Naive thymus-derived CD4-positive, alpha-beta T cell (primary cell): ENCODE measurements at regions of chr9 and their contacts with region 1.

Region 1: GRCh38 chr9:36461323-36461722 is 61.3 kb upstream of the RNF38 start:
- DNase-seq: no peak
- ATAC-seq: peak; percentile 12
- H3K4me3 ChIP-seq: no peak overlapping the region
- H3K4me3 Mint-ChIP-seq: no peak overlapping the region
- H3K27ac ChIP-seq: no peak overlapping the region
- H3K27ac Mint-ChIP-seq: peak overlapping the region; percentile 29 to 71 (median 57)
- H3K4me1 ChIP-seq: peaks cover 18 to 23% of the 10 kb centered on the region in 2 donors
- H3K4me1 Mint-ChIP-seq: peaks cover 36 to 76% (median 68%) of the 10 kb centered on the region in 7 donors
- H3K27me3 ChIP-seq: no peaks in the 10 kb centered on the region
- H3K27me3 Mint-ChIP-seq: no peaks in the 10 kb centered on the region

Region 2: DNA sequence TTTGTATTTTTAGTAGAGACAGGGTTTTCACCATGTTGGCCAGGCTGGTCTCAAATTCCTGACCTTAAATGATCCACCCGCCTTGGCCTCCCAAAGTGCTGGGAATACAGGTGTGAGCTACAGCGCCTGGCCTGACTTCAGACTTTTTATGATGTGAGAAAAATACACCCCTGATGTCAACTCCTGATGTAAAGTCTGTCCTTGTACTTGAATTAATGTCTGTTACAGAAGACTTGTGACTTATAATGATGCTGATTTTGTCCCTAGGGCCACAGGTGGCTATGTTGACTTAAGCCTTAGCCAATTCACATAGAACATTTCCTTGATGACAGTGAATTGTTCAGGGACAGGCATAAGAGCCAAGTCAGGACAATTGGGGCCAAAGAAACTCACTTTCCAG is 68.9 kb after region 1 on chr9:
- CTCF ChIA-PET with region 1: no interaction called
- POLR2A ChIA-PET with region 1: no interaction called
- intact Hi-C with region 1: no loop called
- DNase-seq: no peak
- ATAC-seq: no peak
- H3K4me3 ChIP-seq: no peak overlapping the region
- H3K4me3 Mint-ChIP-seq: no peak overlapping the region
- H3K27ac ChIP-seq: no peak overlapping the region
- H3K27ac Mint-ChIP-seq: no peak overlapping the region
- H3K4me1 ChIP-seq: no peaks in the 10 kb centered on the region
- H3K4me1 Mint-ChIP-seq: peaks cover 0 to 4% (median 0%) of the 10 kb centered on the region in 7 donors
- H3K27me3 ChIP-seq: no peaks in the 10 kb centered on the region
- H3K27me3 Mint-ChIP-seq: peaks cover 0 to 9% (median 0%) of the 10 kb centered on the region in 5 donors

Region 3: GRCh38 chr9:36560857-36561221 is 99.5 kb after region 1 on chr9:
- CTCF ChIA-PET with region 1: interaction called, 20 read pairs
- POLR2A ChIA-PET with region 1: no interaction called
- intact Hi-C with region 1: loop called in 1 of 2 experiments (anchors 2 kb)
- DNase-seq: no peak
- ATAC-seq: no peak
- H3K4me3 ChIP-seq: no peak overlapping the region
- H3K4me3 Mint-ChIP-seq: no peak overlapping the region
- H3K27ac ChIP-seq: no peak overlapping the region
- H3K27ac Mint-ChIP-seq: no peak overlapping the region
- H3K4me1 ChIP-seq: no peaks in the 10 kb centered on the region
- H3K4me1 Mint-ChIP-seq: peaks cover 0 to 2% (median under 1%) of the 10 kb centered on the region in 7 donors
- H3K27me3 ChIP-seq: no peaks in the 10 kb centered on the region
- H3K27me3 Mint-ChIP-seq: no peaks in the 10 kb centered on the region

Region 4: DNA sequence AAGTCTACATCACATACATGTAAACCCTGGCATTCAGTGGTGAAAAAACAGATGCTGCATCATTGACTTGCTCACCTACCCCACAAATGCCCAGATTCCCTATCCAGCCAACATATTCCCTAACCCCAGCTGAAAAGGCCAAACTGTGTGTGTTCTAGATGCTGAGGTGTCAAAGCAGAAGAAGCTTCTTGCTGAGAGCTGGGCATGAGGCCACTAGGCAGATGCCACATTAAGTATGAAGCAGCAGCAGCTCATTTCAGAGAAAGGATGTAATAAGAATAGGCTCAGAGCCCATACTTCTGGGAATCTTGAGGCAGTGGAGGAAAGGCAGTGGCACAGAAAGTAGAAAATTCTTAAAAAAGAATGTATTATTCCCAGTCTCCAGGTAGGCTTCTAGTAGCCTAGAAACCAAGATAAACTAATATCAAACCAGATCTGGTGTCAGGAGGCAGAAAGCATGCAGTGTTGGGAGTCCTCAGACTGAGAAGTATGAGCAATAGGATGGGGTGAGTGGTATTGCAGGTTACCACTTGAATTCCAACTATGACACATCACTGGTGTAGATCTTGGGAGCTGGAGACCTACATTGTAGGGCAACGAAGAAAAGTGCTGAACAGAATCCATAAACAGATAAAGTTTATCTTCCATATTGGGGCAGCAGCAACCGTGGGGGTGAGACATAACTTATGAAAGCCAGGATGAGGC is 889.3 kb after region 1 on chr9:
- CTCF ChIA-PET with region 1: no interaction called
- POLR2A ChIA-PET with region 1: no interaction called
- intact Hi-C with region 1: no loop called
- DNase-seq: no peak
- ATAC-seq: no peak
- H3K4me3 ChIP-seq: no peak overlapping the region
- H3K4me3 Mint-ChIP-seq: no peak overlapping the region
- H3K27ac ChIP-seq: no peak overlapping the region
- H3K27ac Mint-ChIP-seq: no peak overlapping the region
- H3K4me1 ChIP-seq: no peaks in the 10 kb centered on the region
- H3K4me1 Mint-ChIP-seq: peaks cover 0 to 8% (median 0%) of the 10 kb centered on the region in 7 donors
- H3K27me3 ChIP-seq: no peaks in the 10 kb centered on the region
- H3K27me3 Mint-ChIP-seq: no peaks in the 10 kb centered on the region